B cell (primary cell): ENCODE measurements at regions of chr16 and their contacts with region 1.

Region 1: DNA sequence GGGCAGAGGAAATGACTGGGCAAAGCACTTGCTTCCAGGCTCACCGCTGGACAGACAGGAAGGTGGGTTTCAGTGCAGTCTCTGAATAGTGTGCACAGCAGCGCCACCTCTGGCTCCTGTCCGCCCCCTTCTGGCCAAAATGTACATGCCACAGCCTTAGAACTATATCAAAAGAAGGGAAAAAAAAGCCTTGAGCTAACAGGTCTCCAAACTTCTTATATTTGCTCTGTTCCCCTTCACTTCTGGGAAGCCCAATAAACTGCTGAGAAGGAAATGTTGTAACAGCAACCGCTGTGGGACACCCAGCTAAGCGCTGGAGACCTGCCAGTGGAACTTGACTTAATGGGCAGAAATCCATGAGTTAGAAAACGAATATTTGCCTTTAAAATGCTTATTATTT is 17.5 kb downstream of the COG7 start:
- DNase-seq: peak; percentile 73
- ATAC-seq: peak; percentile 84
- H3K4me3 ChIP-seq: no peak overlapping the region
- H3K4me3 Mint-ChIP-seq: no peak overlapping the region
- H3K27ac ChIP-seq: no peak overlapping the region
- H3K27ac Mint-ChIP-seq: no peak overlapping the region
- H3K4me1 ChIP-seq: no peaks in the 10 kb centered on the region
- H3K4me1 Mint-ChIP-seq: peaks cover 3% of the 10 kb centered on the region
- H3K27me3 ChIP-seq: no peaks in the 10 kb centered on the region
- H3K27me3 Mint-ChIP-seq: no peaks in the 10 kb centered on the region
- CTCF ChIP-seq: peak; percentile 95

Region 2: GRCh38 chr16:21554795-21555585 is 1880.5 kb before region 1 on chr16:
- CTCF ChIA-PET with region 1: interaction called, 4 read pairs
- POLR2A ChIA-PET with region 1: no interaction called
- intact Hi-C with region 1: loop called (anchors 10 kb)
- DNase-seq: peak; percentile 100
- ATAC-seq: peak; percentile 98
- H3K4me3 ChIP-seq: peak overlapping the region in 4 of 5 experiments; percentile 15 to 46 (median 34)
- H3K4me3 Mint-ChIP-seq: peak overlapping the region; percentile 84
- H3K27ac ChIP-seq: peak overlapping the region; percentile 70 to 72
- H3K27ac Mint-ChIP-seq: peak overlapping the region; percentile 94
- H3K4me1 ChIP-seq: peaks cover 27 to 34% of the 10 kb centered on the region in 2 donors
- H3K4me1 Mint-ChIP-seq: peaks cover 27% of the 10 kb centered on the region
- H3K27me3 ChIP-seq: no peaks in the 10 kb centered on the region
- H3K27me3 Mint-ChIP-seq: no peaks in the 10 kb centered on the region
- CTCF ChIP-seq: peak; percentile 100

Region 3: GRCh38 chr16:21708533-21709115 is 1726.9 kb before region 1 on chr16:
- CTCF ChIA-PET with region 1: no interaction called
- POLR2A ChIA-PET with region 1: no interaction called
- intact Hi-C with region 1: loop called (anchors 10 kb)
- DNase-seq: peak; percentile 87
- ATAC-seq: peak; percentile 47
- H3K4me3 ChIP-seq: no peak overlapping the region
- H3K4me3 Mint-ChIP-seq: no peak overlapping the region
- H3K27ac ChIP-seq: no peak overlapping the region
- H3K27ac Mint-ChIP-seq: no peak overlapping the region
- H3K4me1 ChIP-seq: peaks cover 7 to 15% of the 10 kb centered on the region in 2 donors
- H3K4me1 Mint-ChIP-seq: peaks cover 9% of the 10 kb centered on the region
- H3K27me3 ChIP-seq: peaks cover 0 to 11% (median 5%) of the 10 kb centered on the region in 4 experiments
- H3K27me3 Mint-ChIP-seq: peaks cover 10% of the 10 kb centered on the region
- CTCF ChIP-seq: peak; percentile 91

Region 4: DNA sequence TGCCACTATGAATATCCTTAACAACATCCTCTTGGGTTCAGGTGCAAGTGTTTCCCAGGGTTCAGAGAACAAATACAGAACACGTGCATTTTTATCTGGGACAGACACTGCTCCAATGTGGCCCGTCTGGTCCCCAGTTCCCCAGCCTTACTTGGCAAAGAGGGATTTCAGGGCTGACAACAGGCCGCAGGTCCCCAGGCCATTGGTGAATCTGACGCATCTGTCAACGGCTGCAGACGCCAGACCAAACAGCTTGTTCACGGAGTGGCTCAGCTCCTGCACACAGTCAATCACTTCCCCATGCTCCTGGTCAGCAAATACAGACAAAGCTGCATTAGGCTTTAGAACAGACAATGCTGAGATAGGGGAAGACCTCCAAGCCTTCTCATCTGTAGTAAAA is 18.7 kb before region 1 on chr16:
- CTCF ChIA-PET with region 1: interaction called, 21 read pairs
- POLR2A ChIA-PET with region 1: no interaction called
- intact Hi-C with region 1: no loop called
- DNase-seq: no peak
- ATAC-seq: no peak
- H3K4me3 ChIP-seq: no peak overlapping the region
- H3K4me3 Mint-ChIP-seq: no peak overlapping the region
- H3K27ac ChIP-seq: no peak overlapping the region
- H3K27ac Mint-ChIP-seq: no peak overlapping the region
- H3K4me1 ChIP-seq: no peaks in the 10 kb centered on the region
- H3K4me1 Mint-ChIP-seq: no peaks in the 10 kb centered on the region
- H3K27me3 ChIP-seq: no peaks in the 10 kb centered on the region
- H3K27me3 Mint-ChIP-seq: no peaks in the 10 kb centered on the region
- CTCF ChIP-seq: no peak

Region 5: GRCh38 chr16:23452572-23453337 is 17.3 kb after region 1 on chr16 and contains the start of gene COG7:
- CTCF ChIA-PET with region 1: interaction called, 36 read pairs
- POLR2A ChIA-PET with region 1: no interaction called
- intact Hi-C with region 1: loop called (anchors 2 kb)
- DNase-seq: peak; percentile 92
- ATAC-seq: peak; percentile 90
- H3K4me3 ChIP-seq: peak within 1 kb of the TSS; percentile 67 to 99 (median 89)
- H3K4me3 Mint-ChIP-seq: peak within 1 kb of the TSS; percentile 91
- H3K27ac ChIP-seq: peak within 1 kb of the TSS in 1 of 2 donors; percentile 67
- H3K27ac Mint-ChIP-seq: peak within 1 kb of the TSS; percentile 90
- H3K4me1 ChIP-seq: peaks cover 11 to 13% of the 10 kb centered on the region in 2 donors
- H3K4me1 Mint-ChIP-seq: peaks cover 24% of the 10 kb centered on the region
- H3K27me3 ChIP-seq: no peaks in the 10 kb centered on the region
- H3K27me3 Mint-ChIP-seq: no peaks in the 10 kb centered on the region
- CTCF ChIP-seq: no peak
- total RNA-seq, gene COG7: 21.3 and 23.3 TPM in 2 replicates